ENCODE measurements at regions of chr1 and their contacts with region 1.

Region 1: DNA sequence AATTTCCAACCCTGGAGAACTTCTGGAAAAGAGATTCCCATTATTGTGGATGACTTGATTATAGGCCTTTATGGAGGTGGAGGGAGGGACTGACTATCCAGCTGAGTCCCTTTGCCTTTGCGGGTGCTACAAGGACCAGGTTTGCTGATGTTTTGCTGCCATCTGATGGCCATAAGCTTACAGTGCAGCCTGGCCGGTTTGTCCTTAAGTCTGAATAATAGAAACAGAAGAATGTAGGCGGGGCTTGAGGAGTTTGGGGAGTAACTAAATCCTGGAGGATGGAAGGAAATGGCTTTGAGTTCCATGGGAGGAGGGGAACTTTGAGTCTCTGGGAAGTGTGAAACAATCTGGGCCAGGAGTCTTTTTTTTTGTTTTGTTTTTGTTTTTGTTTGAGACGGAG is 55.7 kb upstream of the CD1D start:
- DNase-seq: peak; percentile 80
- H3K4me3 Mint-ChIP-seq: no peak overlapping the region
- H3K27ac Mint-ChIP-seq: no peak overlapping the region
- H3K4me1 Mint-ChIP-seq: no peaks in the 10 kb centered on the region
- H3K27me3 Mint-ChIP-seq: peaks cover 34% of the 10 kb centered on the region

Region 2: GRCh38 chr1:157580179-157580827 is 544.7 kb before region 1 on chr1:
- CTCF ChIA-PET with region 1: interaction called, 40 read pairs
- POLR2A ChIA-PET with region 1: no interaction called
- intact Hi-C with region 1: loop called (anchors 1 kb)
- DNase-seq: no peak
- H3K4me3 Mint-ChIP-seq: no peak overlapping the region
- H3K27ac Mint-ChIP-seq: no peak overlapping the region
- H3K4me1 Mint-ChIP-seq: no peaks in the 10 kb centered on the region
- H3K27me3 Mint-ChIP-seq: peaks cover 5% of the 10 kb centered on the region

Region 3: DNA sequence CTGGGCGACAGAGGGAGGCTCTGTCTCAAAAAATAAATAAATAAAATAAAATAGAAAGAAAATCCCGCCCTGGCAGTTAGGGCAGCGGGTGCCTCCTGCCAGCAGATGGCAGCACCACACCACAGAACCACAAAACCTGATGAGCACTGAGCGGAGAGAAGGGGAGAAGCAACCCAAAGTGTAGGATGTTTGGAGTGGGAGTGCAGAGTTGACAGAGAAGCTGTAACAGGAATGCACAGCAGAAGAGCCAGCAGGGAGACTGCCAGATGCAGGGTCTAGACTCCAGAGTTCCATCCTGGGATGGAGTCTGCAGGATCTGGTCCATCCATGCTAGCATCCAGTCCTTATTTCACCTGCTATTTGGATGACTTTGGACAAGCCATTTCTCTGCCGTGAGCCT is 161.3 kb before region 1 on chr1:
- CTCF ChIA-PET with region 1: interaction called, 32 read pairs
- POLR2A ChIA-PET with region 1: no interaction called
- intact Hi-C with region 1: loop called (anchors 2 kb)
- DNase-seq: peak; percentile 69
- H3K4me3 Mint-ChIP-seq: no peak overlapping the region
- H3K27ac Mint-ChIP-seq: no peak overlapping the region
- H3K4me1 Mint-ChIP-seq: peaks cover 5% of the 10 kb centered on the region
- H3K27me3 Mint-ChIP-seq: peaks cover 11% of the 10 kb centered on the region

Region 4: DNA sequence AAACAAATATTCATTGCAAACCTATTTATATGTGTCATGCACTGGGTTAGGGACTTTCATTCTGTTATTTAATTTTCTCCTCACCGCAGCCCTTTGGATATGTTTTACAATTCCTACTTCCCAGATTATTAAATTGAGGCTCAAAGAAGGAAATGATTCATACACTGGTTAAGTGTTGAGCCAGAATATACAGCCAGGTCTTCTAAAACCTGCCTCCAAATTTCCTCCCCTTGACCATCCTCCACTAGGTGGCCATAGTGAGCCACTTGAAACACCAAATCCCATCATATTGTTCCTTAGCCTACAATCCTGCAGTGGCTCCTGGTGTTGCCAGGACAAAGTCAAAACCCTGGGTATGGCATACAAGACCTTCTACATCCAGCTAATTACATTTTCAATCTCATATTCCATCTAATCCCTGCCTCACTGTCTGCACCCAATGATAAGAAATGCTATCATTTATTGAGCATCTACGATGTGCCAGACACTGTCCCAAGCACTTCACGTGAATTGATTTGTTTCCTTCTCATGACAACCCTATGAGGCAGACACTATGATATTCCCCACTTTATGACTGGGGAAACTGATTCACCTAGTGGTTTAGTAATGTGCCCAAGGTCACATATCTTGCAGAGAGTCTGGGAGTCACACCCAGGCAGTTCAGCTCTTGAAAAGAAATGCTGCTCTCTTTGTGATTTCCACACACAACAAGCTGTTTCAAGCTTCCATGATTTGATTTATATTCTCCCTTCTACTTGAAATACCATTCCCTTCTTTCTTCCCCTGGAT is 155.1 kb before region 1 on chr1:
- CTCF ChIA-PET with region 1: interaction called, 19 read pairs
- POLR2A ChIA-PET with region 1: no interaction called
- intact Hi-C with region 1: no loop called
- DNase-seq: no peak
- H3K4me3 Mint-ChIP-seq: no peak overlapping the region
- H3K27ac Mint-ChIP-seq: no peak overlapping the region
- H3K4me1 Mint-ChIP-seq: no peaks in the 10 kb centered on the region
- H3K27me3 Mint-ChIP-seq: peaks cover 2% of the 10 kb centered on the region

Region 5: DNA sequence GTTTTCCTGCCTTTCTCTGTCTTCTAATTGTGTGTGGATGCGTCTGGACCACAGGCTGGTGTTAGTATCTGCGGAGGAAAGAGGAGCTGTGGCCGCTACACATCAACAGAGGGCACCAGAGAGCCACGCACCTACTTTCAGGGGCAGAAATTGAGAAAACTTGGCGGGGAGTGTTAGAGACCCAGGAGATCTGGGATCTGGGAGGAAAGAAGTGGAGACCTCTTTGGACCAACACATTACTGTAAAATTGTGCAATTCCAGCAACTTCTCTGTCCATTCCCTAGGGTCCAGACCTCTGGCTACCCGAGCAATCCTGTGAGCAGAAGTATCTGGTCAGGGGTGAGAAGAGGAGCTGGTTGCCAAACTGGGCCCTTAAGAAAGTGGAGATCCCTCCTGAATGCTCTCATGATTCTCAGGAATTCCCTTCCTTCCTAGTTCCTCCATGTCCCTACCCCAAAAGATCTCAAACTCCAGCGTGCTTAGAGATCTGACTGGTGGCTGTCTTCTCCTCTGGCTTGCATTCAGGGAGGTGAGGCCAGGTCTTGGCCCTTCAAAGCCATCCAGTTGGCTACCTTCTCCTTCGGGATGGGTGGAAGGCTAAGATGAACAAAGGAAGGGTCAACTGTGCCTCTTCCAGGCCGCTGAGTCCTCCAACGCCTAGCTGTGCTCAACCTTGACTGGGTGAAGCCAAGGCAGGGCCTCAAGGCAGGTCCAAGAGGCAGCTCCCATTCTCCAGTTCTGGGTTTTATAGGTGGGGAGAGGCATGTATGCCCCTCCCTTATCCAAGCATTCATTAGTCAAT is 132.8 kb before region 1 on chr1:
- CTCF ChIA-PET with region 1: interaction called, 112 read pairs
- POLR2A ChIA-PET with region 1: no interaction called
- intact Hi-C with region 1: loop called (anchors 2 kb)
- DNase-seq: peak; percentile 59
- H3K4me3 Mint-ChIP-seq: no peak overlapping the region
- H3K27ac Mint-ChIP-seq: no peak overlapping the region
- H3K4me1 Mint-ChIP-seq: peaks cover 2% of the 10 kb centered on the region
- H3K27me3 Mint-ChIP-seq: peaks cover 37% of the 10 kb centered on the region

Region 6: DNA sequence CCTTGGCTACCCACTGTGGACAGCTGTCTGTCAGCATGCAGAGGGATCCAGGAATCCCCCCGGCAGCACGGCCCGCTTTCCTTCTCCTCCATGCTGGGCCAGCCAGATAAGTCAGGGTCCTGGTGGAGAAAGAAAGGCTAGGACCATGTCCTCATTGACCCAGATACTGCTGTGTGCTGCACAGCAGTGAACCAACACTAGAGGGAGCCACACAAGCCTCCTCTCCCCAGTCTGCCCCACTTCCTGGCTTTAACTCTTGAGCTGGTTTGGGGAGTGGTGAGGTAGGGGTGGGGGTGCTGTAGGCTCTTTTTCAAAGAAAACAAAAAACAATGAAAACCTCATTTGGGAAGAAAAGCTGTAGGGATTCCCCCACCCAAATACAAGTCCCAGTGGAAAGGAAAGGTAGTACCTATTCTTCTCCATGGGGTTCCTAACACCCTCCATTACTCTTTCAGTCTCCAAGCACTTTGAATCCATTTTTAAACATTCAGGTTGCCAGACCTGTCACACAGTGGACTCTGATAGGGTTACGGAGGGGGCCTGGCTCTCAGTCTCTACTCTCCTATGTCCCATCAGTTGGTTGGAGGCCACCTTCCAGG is 29.2 kb before region 1 on chr1:
- CTCF ChIA-PET with region 1: interaction called, 115 read pairs
- POLR2A ChIA-PET with region 1: no interaction called
- intact Hi-C with region 1: loop called (anchors 1 kb)
- DNase-seq: peak; percentile 47
- H3K4me3 Mint-ChIP-seq: no peak overlapping the region
- H3K27ac Mint-ChIP-seq: no peak overlapping the region
- H3K4me1 Mint-ChIP-seq: no peaks in the 10 kb centered on the region
- H3K27me3 Mint-ChIP-seq: no peaks in the 10 kb centered on the region

Region 7: GRCh38 chr1:158140764-158141192 is 15.8 kb after region 1 on chr1:
- CTCF ChIA-PET with region 1: interaction called, 13 read pairs
- POLR2A ChIA-PET with region 1: no interaction called
- intact Hi-C with region 1: no loop called
- DNase-seq: no peak
- H3K4me3 Mint-ChIP-seq: no peak overlapping the region
- H3K27ac Mint-ChIP-seq: no peak overlapping the region
- H3K4me1 Mint-ChIP-seq: no peaks in the 10 kb centered on the region
- H3K27me3 Mint-ChIP-seq: no peaks in the 10 kb centered on the region

Measured in activated CD4-positive, alpha-beta memory T cell treated with anti-CD3 and anti-CD28 coated beads for 36 hours (primary cell).